MCF 10A (cell line): ENCODE measurements at regions of chr12 and their contacts with region 1.

Region 1: DNA sequence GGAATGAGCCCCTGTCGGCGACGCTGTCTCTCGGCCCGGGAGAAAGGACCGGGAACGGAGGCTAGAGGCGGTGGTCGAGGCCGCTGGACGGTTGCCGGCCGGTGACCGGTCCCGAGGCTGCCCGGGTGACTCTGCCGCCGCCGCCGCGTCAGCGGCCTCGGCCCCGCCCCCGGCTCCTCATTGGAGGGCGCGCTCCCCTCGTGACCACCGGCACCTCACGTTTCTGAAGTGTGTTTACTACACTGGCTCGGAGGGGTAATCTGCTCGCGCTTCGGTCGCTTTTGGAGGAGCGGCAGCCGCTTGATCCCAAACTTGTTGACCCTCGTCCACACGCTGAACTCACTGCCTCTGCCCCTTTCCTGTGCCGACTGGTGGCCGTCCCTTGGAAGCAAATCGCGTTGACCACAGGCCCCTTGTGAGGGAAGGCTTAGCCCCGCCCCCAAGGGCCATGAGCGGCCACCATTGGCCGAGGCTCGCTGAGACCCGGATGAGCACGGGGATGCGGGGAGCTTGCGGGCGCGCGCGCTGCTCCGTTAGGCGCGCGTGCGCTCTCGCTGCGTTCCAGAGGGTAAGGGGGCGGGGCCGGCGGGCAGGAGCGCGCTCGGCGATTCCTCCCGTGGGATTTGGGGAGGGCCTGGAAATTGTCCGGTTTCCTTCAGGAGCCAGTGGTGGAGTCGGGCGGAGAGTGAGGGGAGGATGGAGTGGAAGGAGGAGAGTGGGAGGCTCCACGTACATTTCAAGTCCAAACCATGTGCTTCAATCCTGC is at the start of gene CRY1:
- DNase-seq: peak; percentile 96
- H3K4me3 Mint-ChIP-seq: no peak within 1 kb of the TSS
- H3K27ac Mint-ChIP-seq: no peak within 1 kb of the TSS
- H3K4me1 Mint-ChIP-seq: no peaks in the 10 kb centered on the region
- H3K27me3 Mint-ChIP-seq: peaks cover 13% of the 10 kb centered on the region
- CTCF ChIP-seq: no peak
- total RNA-seq, gene CRY1: 11.6 and 14.9 TPM in 2 replicates

Region 2: DNA sequence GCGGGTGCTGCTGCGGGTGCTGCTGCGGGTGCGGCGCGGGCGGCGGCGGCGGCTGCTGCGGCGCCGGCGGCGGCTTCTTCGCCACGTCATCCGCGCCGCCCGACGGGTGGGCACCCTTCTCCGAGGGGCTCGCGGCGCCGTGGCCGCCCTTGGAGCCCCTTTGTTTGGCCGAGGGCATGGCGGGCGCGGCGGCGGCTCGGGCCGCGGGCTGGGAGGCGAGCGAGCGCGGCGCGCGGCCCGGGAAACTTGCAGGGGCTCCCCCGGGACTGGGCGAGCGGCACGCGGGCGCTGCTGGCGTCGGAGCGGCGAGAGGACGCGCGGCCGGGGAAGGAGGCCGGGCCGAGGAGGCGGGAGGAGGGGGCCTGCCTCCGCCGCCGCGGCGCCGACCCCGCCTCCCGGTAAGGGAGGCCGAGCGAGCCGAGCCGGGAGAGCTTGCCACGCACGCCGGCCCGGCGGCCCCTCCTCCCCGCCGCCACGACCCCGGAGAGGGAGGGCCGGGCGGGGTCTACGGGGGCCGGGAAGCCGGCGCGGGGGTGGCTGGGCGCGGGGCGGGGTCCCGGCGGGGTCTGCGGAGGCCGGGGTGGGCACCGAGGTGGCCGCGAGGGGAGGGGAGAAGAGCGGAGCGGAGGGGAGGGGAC is 845.8 kb before region 1 on chr12 and contains the start of gene CKAP4:
- CTCF ChIA-PET with region 1: no interaction called
- POLR2A ChIA-PET with region 1: no interaction called
- intact Hi-C with region 1: loop called (anchors 10 kb)
- DNase-seq: peak; percentile 72
- H3K4me3 Mint-ChIP-seq: peak within 1 kb of the TSS; percentile 76
- H3K27ac Mint-ChIP-seq: peak within 1 kb of the TSS; percentile 23
- H3K4me1 Mint-ChIP-seq: peaks cover 23% of the 10 kb centered on the region
- H3K27me3 Mint-ChIP-seq: no peaks in the 10 kb centered on the region
- CTCF ChIP-seq: no peak
- total RNA-seq, gene CKAP4: 101 and 118 TPM in 2 replicates

Region 3: GRCh38 chr12:106774005-106774807 is 319.4 kb before region 1 on chr12 and contains the start of gene RIC8B:
- CTCF ChIA-PET with region 1: no interaction called
- POLR2A ChIA-PET with region 1: no interaction called
- intact Hi-C with region 1: loop called (anchors 10 kb)
- DNase-seq: peak; percentile 99
- H3K4me3 Mint-ChIP-seq: peak within 1 kb of the TSS; percentile 99
- H3K27ac Mint-ChIP-seq: peak within 1 kb of the TSS; percentile 98
- H3K4me1 Mint-ChIP-seq: peaks cover 17% of the 10 kb centered on the region
- H3K27me3 Mint-ChIP-seq: peaks cover 8% of the 10 kb centered on the region
- CTCF ChIP-seq: no peak
- total RNA-seq, gene RIC8B: 10.0 and 10.8 TPM in 2 replicates

Region 4: GRCh38 chr12:106986625-106987430 is 106.8 kb before region 1 on chr12 and contains the start of gene MTERF2:
- CTCF ChIA-PET with region 1: interaction called, 3 read pairs
- POLR2A ChIA-PET with region 1: interaction called, 3 read pairs
- intact Hi-C with region 1: loop called (anchors 1 kb)
- DNase-seq: peak; percentile 96
- H3K4me3 Mint-ChIP-seq: peak within 1 kb of the TSS; percentile 97
- H3K27ac Mint-ChIP-seq: peak within 1 kb of the TSS; percentile 92
- H3K4me1 Mint-ChIP-seq: peaks cover 25% of the 10 kb centered on the region
- H3K27me3 Mint-ChIP-seq: no peaks in the 10 kb centered on the region
- CTCF ChIP-seq: no peak
- total RNA-seq, gene MTERF2: 7.6 and 9.3 TPM in 2 replicates

Region 5: GRCh38 chr12:107079172-107080011 is 14.2 kb before region 1 on chr12:
- CTCF ChIA-PET with region 1: interaction called, 38 read pairs
- POLR2A ChIA-PET with region 1: interaction called, 4 read pairs
- intact Hi-C with region 1: no loop called
- DNase-seq: peak; percentile 35
- H3K4me3 Mint-ChIP-seq: no peak overlapping the region
- H3K27ac Mint-ChIP-seq: no peak overlapping the region
- H3K4me1 Mint-ChIP-seq: no peaks in the 10 kb centered on the region
- H3K27me3 Mint-ChIP-seq: no peaks in the 10 kb centered on the region
- CTCF ChIP-seq: peak; percentile 60